Esophagus muscularis mucosa (tissue), 4 donors: ENCODE measurements at regions of chr14 and their contacts with region 1.

Region 1: GRCh38 chr14:102688290-102688689 is 89.0 kb upstream of the TRAF3 start:
- DNase-seq: no peak
- H3K4me3 ChIP-seq: no peak overlapping the region
- H3K27ac ChIP-seq: no peak overlapping the region
- H3K4me1 ChIP-seq: peaks cover 0 to 21% (median 9%) of the 10 kb centered on the region in 4 donors
- H3K27me3 ChIP-seq: no peaks in the 10 kb centered on the region
- CTCF ChIP-seq: no peak
- EP300 ChIP-seq: no peak
- POLR2A ChIP-seq: no peak

Region 2: GRCh38 chr14:102344485-102344884 is 343.8 kb before region 1 on chr14:
- intact Hi-C with region 1: loop called (anchors 5 kb)
- DNase-seq: no peak
- H3K4me3 ChIP-seq: no peak overlapping the region
- H3K27ac ChIP-seq: no peak overlapping the region
- H3K4me1 ChIP-seq: no peaks in the 10 kb centered on the region
- H3K27me3 ChIP-seq: no peaks in the 10 kb centered on the region
- CTCF ChIP-seq: no peak
- EP300 ChIP-seq: no peak
- POLR2A ChIP-seq: no peak